ENCODE measurements at regions of chr1 and their contacts with region 1.

Region 1: GRCh38 chr1:3453203-3453761 is 1.2 kb upstream of the ARHGEF16 start:
- DNase-seq: peak; percentile 45 to 78 (median 55)
- H3K4me3 ChIP-seq: no peak overlapping the region
- H3K4me3 Mint-ChIP-seq: peak overlapping the region in 6 of 7 donors; percentile 55 to 74 (median 62)
- H3K27ac ChIP-seq: no peak overlapping the region
- H3K27ac Mint-ChIP-seq: peak overlapping the region in 2 of 8 donors; percentile 27 to 47
- H3K4me1 ChIP-seq: peaks cover 11% of the 10 kb centered on the region
- H3K4me1 Mint-ChIP-seq: peaks cover 0 to 6% (median 2%) of the 10 kb centered on the region in 3 donors
- H3K27me3 ChIP-seq: peaks cover 20% of the 10 kb centered on the region
- H3K27me3 Mint-ChIP-seq: peaks cover 4 to 20% of the 10 kb centered on the region in 2 donors

Region 2: DNA sequence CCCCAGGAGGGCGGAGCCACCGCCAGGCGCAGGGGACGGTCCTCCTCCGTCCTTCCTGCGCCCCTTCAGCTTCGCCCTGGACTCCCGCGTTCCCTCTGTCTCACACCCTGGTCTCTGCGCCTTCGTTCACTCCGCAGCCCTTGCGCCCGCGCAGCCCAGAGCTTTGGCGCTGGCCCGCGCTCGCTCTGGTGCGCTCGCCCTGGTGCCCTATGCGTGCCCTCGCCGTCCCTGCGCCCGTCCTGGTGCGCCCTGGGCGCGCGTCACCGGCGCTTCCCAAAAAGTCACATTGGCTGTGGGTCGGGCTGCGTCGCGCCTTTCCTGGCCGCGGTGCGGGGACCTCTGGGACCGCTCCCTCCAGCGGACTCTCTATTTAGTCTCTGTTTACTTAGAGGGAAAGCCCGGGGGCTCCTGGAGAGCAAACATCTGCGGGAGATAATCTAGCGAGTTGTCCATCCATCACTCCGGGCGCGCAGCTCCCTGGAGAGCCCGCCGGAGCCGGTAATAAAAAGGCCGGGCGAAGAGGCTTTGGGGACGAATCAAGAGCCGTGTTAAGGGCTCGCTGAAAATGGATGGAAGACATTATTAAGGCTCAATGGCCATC is 205.7 kb before region 1 on chr1:
- CTCF ChIA-PET with region 1: no interaction called
- POLR2A ChIA-PET with region 1: no interaction called
- DNase-seq: no peak
- H3K4me3 ChIP-seq: no peak overlapping the region
- H3K4me3 Mint-ChIP-seq: no peak overlapping the region
- H3K27ac ChIP-seq: no peak overlapping the region
- H3K27ac Mint-ChIP-seq: no peak overlapping the region
- H3K4me1 ChIP-seq: no peaks in the 10 kb centered on the region
- H3K4me1 Mint-ChIP-seq: no peaks in the 10 kb centered on the region
- H3K27me3 ChIP-seq: no peaks in the 10 kb centered on the region
- H3K27me3 Mint-ChIP-seq: peaks cover 3 to 17% of the 10 kb centered on the region in 2 donors

Region 3: DNA sequence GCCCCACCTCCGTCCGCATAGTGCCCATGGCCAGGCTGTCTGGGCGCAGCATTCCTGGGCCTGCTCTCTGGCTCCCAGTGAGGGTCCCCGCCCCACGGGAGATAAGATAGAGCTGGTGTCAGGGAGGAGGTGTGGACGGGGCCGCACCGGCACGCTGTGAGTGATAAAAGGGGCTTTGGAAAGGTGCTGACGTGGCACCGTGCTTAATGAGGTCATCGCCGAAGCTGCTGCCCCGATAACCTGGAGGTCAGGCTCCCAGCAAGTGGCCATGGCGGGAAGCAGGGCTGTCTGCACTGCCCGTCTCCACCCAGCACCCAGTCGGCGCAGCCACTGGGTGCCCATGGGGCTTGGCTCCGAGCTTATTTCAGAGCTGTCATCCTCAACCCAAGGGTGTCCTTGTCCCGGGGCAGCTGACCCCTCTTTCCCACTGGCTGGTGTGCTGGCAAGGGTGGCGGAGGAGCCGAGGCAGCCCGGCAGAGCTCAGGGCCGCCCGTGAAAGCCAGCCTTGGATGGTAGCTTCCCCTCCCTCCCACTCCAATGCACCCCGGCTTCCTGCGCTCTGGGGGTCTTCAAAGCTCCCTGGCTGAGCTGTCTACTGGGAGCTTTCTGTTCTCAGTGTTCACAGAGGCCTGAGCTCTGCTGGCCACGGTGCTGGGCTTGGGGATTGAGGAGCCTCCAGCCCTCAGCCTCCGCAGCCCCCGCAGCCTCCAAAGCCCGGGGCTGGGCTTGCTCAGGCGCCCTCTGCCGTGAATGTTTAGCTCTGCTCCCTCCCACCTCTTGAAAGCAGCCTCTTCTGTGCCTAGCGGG is 103.9 kb before region 1 on chr1:
- CTCF ChIA-PET with region 1: no interaction called
- POLR2A ChIA-PET with region 1: no interaction called
- DNase-seq: no peak
- H3K4me3 ChIP-seq: no peak overlapping the region
- H3K4me3 Mint-ChIP-seq: no peak overlapping the region
- H3K27ac ChIP-seq: no peak overlapping the region
- H3K27ac Mint-ChIP-seq: no peak overlapping the region
- H3K4me1 ChIP-seq: no peaks in the 10 kb centered on the region
- H3K4me1 Mint-ChIP-seq: no peaks in the 10 kb centered on the region
- H3K27me3 ChIP-seq: no peaks in the 10 kb centered on the region
- H3K27me3 Mint-ChIP-seq: peaks cover 3% of the 10 kb centered on the region in 2 donors

Region 4: DNA sequence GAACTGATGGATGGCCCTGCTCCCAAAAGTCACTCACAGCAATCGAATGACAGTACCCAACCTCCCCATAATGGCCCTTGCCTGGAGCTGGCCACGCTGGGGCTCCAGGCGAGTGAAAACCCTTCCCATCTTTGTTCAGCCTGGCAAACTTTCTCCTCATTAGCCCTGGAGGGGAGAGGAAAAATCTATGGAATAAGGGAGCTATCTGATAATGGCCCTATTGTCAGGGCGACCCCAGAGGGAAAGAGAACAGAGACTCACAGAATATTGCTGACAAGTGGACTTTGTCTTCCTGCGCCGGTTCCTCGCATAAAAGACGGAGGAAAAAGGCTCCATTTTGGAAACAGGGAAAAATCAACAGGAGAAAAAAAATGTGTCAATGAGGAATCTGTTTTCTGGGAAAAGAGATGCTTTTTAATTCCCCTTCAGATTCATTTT is 11.9 kb before region 1 on chr1:
- CTCF ChIA-PET with region 1: interaction called, 17 read pairs
- POLR2A ChIA-PET with region 1: no interaction called
- DNase-seq: no peak
- H3K4me3 ChIP-seq: no peak overlapping the region
- H3K4me3 Mint-ChIP-seq: no peak overlapping the region
- H3K27ac ChIP-seq: no peak overlapping the region
- H3K27ac Mint-ChIP-seq: no peak overlapping the region
- H3K4me1 ChIP-seq: no peaks in the 10 kb centered on the region
- H3K4me1 Mint-ChIP-seq: no peaks in the 10 kb centered on the region
- H3K27me3 ChIP-seq: no peaks in the 10 kb centered on the region
- H3K27me3 Mint-ChIP-seq: peaks cover 7 to 13% of the 10 kb centered on the region in 2 donors

Region 5: GRCh38 chr1:3483801-3484444 is 30.6 kb after region 1 on chr1:
- CTCF ChIA-PET with region 1: interaction called, 13 read pairs
- POLR2A ChIA-PET with region 1: no interaction called
- DNase-seq: peak in 1 of 5 donors; percentile 22
- H3K4me3 ChIP-seq: no peak overlapping the region
- H3K4me3 Mint-ChIP-seq: no peak overlapping the region
- H3K27ac ChIP-seq: no peak overlapping the region
- H3K27ac Mint-ChIP-seq: peak overlapping the region in 1 of 8 donors; percentile 58
- H3K4me1 ChIP-seq: no peaks in the 10 kb centered on the region
- H3K4me1 Mint-ChIP-seq: no peaks in the 10 kb centered on the region
- H3K27me3 ChIP-seq: no peaks in the 10 kb centered on the region
- H3K27me3 Mint-ChIP-seq: no peaks in the 10 kb centered on the region

Region 6: DNA sequence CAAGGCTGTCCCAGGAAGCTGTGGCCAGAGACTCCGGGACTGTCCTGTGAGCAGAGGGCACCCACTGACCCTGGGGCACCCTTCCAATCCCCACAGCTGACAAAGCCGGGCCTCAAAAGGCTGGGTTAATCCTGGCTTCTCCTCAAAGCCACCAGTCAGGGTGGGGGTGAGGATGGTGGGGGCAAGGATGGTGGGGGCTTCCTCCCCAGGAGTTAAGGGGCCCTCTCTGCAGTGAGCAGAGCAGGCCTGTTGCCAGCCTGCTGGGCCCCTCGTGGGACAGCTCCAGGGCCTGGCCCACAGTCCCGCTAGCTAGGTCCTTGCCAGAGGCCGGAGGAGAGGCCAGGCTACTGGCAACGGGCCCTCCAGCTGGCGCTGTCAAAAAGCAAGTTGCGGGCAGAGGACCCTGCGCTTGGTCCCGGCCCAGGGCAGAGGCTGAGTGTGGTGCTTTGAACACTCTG is 261.0 kb after region 1 on chr1:
- CTCF ChIA-PET with region 1: interaction called, 10 read pairs
- POLR2A ChIA-PET with region 1: no interaction called
- DNase-seq: no peak
- H3K4me3 ChIP-seq: no peak overlapping the region
- H3K4me3 Mint-ChIP-seq: no peak overlapping the region
- H3K27ac ChIP-seq: no peak overlapping the region
- H3K27ac Mint-ChIP-seq: no peak overlapping the region
- H3K4me1 ChIP-seq: peaks cover 2% of the 10 kb centered on the region
- H3K4me1 Mint-ChIP-seq: no peaks in the 10 kb centered on the region
- H3K27me3 ChIP-seq: no peaks in the 10 kb centered on the region
- H3K27me3 Mint-ChIP-seq: peaks cover 9 to 24% of the 10 kb centered on the region in 2 donors

Region 7: DNA sequence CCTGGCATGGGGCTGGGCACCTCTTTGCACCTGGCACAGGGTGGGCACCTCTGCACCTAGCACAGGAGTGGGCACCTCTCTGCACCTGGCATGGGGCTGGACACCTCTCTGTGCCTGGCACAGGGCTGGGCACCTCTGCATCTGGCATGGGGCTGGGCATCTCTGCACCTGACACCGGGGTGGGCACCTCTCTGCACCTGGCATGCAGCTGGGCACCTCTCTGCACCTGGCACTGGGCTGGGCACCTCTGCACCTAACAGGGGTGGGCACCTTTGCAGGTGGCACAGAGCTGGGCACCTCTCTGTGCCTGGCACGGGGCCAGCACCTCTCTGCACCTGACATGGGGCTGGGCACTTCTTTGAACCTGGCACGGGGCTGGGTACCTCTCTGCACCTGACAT is 269.6 kb after region 1 on chr1:
- CTCF ChIA-PET with region 1: interaction called, 26 read pairs
- POLR2A ChIA-PET with region 1: no interaction called
- DNase-seq: no peak
- H3K4me3 ChIP-seq: no peak overlapping the region
- H3K4me3 Mint-ChIP-seq: no peak overlapping the region
- H3K27ac ChIP-seq: no peak overlapping the region
- H3K27ac Mint-ChIP-seq: no peak overlapping the region
- H3K4me1 ChIP-seq: peaks cover 12% of the 10 kb centered on the region
- H3K4me1 Mint-ChIP-seq: peaks cover 0 to 1% (median 0%) of the 10 kb centered on the region in 3 donors
- H3K27me3 ChIP-seq: no peaks in the 10 kb centered on the region
- H3K27me3 Mint-ChIP-seq: peaks cover 1 to 6% of the 10 kb centered on the region in 2 donors

Measured in CD8-positive, alpha-beta memory T cell (primary cell).